ENCODE measurements at regions of chr1 and their contacts with region 1.

Region 1: GRCh38 chr1:166166695-166167571 is at the start of gene FAM78B:
- DNase-seq: peak; percentile 82
- total RNA-seq, gene FAM78B: 3.1 and 4.5 TPM in 2 replicates

Region 2: DNA sequence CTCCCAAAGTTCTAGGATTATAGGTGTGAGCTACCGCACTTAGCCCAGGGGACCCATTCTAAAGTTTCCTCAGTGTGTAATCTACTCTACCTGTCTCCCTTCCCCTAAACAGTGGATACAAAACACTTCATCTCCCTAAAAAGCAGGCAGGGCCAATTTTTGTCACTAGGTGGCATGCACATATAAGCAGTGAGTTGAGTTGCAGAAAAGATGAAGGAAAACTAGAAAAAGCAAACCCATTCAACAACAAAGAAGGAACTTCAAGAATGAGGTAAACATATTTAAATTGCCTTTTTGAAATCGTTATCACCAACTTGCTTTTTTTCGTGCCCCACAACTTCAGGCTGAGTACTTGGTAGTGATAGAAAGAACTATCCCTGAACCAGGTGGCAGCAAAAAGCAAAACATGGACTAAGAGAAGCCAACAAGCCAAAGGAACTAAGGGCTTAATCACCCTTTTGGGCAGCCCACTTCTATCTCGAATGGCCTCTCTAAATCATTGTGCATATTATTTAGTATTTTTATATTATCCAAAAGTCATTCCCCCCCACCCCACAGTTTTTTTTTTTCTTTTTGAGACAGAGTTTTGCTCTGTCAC is 448.9 kb before region 1 on chr1:
- in situ Hi-C with region 1: loop called (anchors 25 kb)
- DNase-seq: peak; percentile 78

Region 3: DNA sequence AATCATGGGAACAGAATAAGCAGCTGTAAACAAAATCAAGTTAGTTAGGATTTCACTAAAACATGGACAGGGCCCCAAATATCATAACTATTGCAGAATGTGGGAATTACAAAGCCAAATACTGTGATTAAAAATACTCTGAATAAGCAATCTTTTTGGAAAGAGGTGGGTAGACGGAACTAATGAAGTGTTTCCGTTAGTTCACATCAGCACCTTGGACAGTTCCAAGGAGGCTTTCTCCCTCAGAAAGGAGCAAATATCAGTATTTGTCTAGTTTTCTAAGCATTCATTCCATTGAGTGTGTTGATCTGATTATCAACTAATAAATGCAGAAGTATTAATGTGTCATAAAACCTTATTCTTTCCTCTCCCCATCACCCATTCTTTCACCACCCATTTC is 97.5 kb before region 1 on chr1:
- in situ Hi-C with region 1: no loop called
- DNase-seq: no peak

Measured in SK-MEL-5 (cell line).